GM12878 (cell line): ENCODE measurements at regions of chr6 and their contacts with region 1.

Region 1: GRCh38 chr6:129646642-129647041 is 63.3 kb downstream of the ARHGAP18 start:
- DNase-seq: peak; percentile 61
- ATAC-seq: peak; percentile 84
- H3K4me3 ChIP-seq: no peak overlapping the region
- H3K27ac ChIP-seq: peak overlapping the region; percentile 65
- H3K4me1 ChIP-seq: peaks cover 42% of the 10 kb centered on the region
- H3K27me3 ChIP-seq: no peaks in the 10 kb centered on the region
- CTCF ChIP-seq: no peak
- EP300 ChIP-seq: peak in 1 of 2 experiments; percentile 77; a peak in 2 of 4 replicates
- POLR2A ChIP-seq: no peak
- RAD21 ChIP-seq: no peak

Region 2: GRCh38 chr6:129606664-129607063 is 40.0 kb before region 1 on chr6:
- CTCF ChIA-PET with region 1: interaction called, 3 read pairs
- POLR2A ChIA-PET with region 1: no interaction called
- RAD21 ChIA-PET with region 1: interaction called, 3 read pairs
- SMC1A ChIA-PET with region 1: interaction called, 7 read pairs
- in situ Hi-C with region 1: no loop called
- intact Hi-C with region 1: loop called (anchors 5 kb)
- DNase-seq: peak; percentile 59
- ATAC-seq: peak; percentile 87
- H3K4me3 ChIP-seq: no peak overlapping the region
- H3K27ac ChIP-seq: peak overlapping the region; percentile 80
- H3K4me1 ChIP-seq: peaks cover 31% of the 10 kb centered on the region
- H3K27me3 ChIP-seq: no peaks in the 10 kb centered on the region
- CTCF ChIP-seq: no peak
- EP300 ChIP-seq: peak; percentile 34 to 51; a peak in 2 of 4 replicates
- POLR2A ChIP-seq: no peak
- RAD21 ChIP-seq: 0 out of 2 replicates have a peak, but pooled peaks have one; percentile 11

Region 3: DNA sequence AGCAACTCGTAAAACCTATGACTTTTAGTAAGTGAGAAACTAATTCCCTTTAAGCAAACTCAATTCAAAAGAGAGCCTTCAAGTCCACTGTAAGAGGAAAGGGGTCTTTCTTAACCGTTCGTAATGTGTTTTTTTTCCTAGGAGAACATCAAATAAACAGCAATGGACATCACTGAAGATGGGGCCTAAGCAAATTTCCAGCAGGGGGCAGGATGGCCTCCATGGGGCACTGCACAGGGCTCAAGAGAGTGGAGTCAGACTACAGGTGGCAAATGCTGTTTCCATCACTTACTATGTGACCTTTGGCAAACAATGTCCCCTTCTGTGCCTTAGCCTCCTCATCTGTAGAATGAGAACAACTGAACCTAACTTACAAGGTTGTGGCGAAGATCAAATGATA is 25.4 kb before region 1 on chr6:
- CTCF ChIA-PET with region 1: interaction called, 4 read pairs
- POLR2A ChIA-PET with region 1: no interaction called
- RAD21 ChIA-PET with region 1: interaction called, 6 read pairs
- SMC1A ChIA-PET with region 1: interaction called, 5 read pairs
- in situ Hi-C with region 1: no loop called
- intact Hi-C with region 1: loop called (anchors 2 kb)
- DNase-seq: no peak
- ATAC-seq: peak; percentile 74
- H3K4me3 ChIP-seq: no peak overlapping the region
- H3K27ac ChIP-seq: no peak overlapping the region
- H3K4me1 ChIP-seq: no peaks in the 10 kb centered on the region
- H3K27me3 ChIP-seq: no peaks in the 10 kb centered on the region
- CTCF ChIP-seq: peak; percentile 29 to 50 (median 37); a peak in 4 of 6 replicates
- EP300 ChIP-seq: no peak
- POLR2A ChIP-seq: no peak
- RAD21 ChIP-seq: 0 out of 2 replicates have a peak, but pooled peaks have one; percentile 7

Region 4: DNA sequence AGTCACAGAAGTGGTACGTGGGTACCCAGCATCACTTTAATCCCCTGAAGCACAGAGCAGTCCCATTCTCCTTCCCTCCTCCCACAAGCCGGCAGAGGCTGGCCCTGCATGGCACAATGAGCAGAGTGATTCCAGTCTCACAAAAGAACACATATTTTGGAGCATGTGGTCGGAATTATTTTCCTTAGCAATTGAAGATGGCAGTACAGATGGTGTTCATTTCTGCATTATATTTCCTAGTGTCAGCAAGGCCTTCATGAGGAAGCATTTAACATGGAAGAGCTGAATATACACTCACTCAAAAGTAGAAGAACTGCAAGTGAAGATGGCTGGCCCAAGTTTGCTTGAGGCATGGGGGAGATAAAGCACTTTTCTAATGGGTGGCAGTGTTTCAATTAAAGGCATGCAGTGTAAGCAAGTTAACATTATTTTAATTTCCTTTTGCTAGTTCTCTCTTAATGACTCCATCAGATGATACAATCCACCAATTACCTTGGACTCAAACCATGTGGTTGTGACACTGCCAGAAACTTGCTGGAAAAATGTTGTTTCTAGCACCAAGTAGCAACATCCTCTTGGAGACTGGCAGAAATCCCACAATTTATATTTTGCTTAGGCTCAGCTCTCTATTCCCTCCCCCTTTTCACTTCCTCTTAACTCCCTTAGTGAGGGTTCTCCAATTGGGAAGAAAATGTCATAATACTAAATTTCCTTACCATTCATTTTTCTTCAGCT is 11.1 kb before region 1 on chr6:
- CTCF ChIA-PET with region 1: interaction called, 13 read pairs
- POLR2A ChIA-PET with region 1: interaction called, 8 read pairs
- RAD21 ChIA-PET with region 1: interaction called, 6 read pairs
- SMC1A ChIA-PET with region 1: interaction called, 29 read pairs
- in situ Hi-C with region 1: no loop called
- intact Hi-C with region 1: no loop called
- DNase-seq: no peak
- ATAC-seq: no peak
- H3K4me3 ChIP-seq: no peak overlapping the region
- H3K27ac ChIP-seq: no peak overlapping the region
- H3K4me1 ChIP-seq: peaks cover 16% of the 10 kb centered on the region; the same call in 1 of the 2 replicates
- H3K27me3 ChIP-seq: no peaks in the 10 kb centered on the region
- CTCF ChIP-seq: no peak
- EP300 ChIP-seq: no peak
- POLR2A ChIP-seq: no peak
- RAD21 ChIP-seq: no peak

Region 5: GRCh38 chr6:129661536-129662405 is 15.1 kb after region 1 on chr6:
- CTCF ChIA-PET with region 1: interaction called, 4 read pairs
- POLR2A ChIA-PET with region 1: interaction called, 6 read pairs
- RAD21 ChIA-PET with region 1: interaction called, 24 read pairs
- SMC1A ChIA-PET with region 1: interaction called, 72 read pairs
- in situ Hi-C with region 1: no loop called
- intact Hi-C with region 1: no loop called
- DNase-seq: no peak
- ATAC-seq: peak; percentile 40
- H3K4me3 ChIP-seq: peak overlapping the region; percentile 7; the same call in 1 of the 2 replicates
- H3K27ac ChIP-seq: peak overlapping the region; percentile 89
- H3K4me1 ChIP-seq: peaks cover 44% of the 10 kb centered on the region
- H3K27me3 ChIP-seq: no peaks in the 10 kb centered on the region
- CTCF ChIP-seq: no peak
- EP300 ChIP-seq: peak in 1 of 2 experiments; percentile 61; a peak in 1 of 4 replicates
- POLR2A ChIP-seq: no peak
- RAD21 ChIP-seq: no peak

Region 6: GRCh38 chr6:131597446-131597845 is 1950.8 kb after region 1 on chr6:
- CTCF ChIA-PET with region 1: no interaction called
- POLR2A ChIA-PET with region 1: no interaction called
- RAD21 ChIA-PET with region 1: no interaction called
- SMC1A ChIA-PET with region 1: no interaction called
- in situ Hi-C with region 1: no loop called
- intact Hi-C with region 1: no loop called
- DNase-seq: no peak
- ATAC-seq: peak; percentile 50; the same call in 2 of the 3 replicates
- H3K4me3 ChIP-seq: no peak overlapping the region
- H3K27ac ChIP-seq: no peak overlapping the region
- H3K4me1 ChIP-seq: no peaks in the 10 kb centered on the region
- H3K27me3 ChIP-seq: no peaks in the 10 kb centered on the region
- CTCF ChIP-seq: peak; percentile 18 to 29 (median 25); a peak in 4 of 6 replicates
- EP300 ChIP-seq: no peak
- POLR2A ChIP-seq: no peak
- RAD21 ChIP-seq: no peak